Activated T-helper 1 cell treated with anti-CD3 and anti-CD28 coated beads, Interleukin-12 subunit alpha, Interleukin-12 subunit beta, Interleukin-2, Interleukin-4 antibody, amounts not matched to agents 30 ng/mL and 10 ng/mL and 1 ng/mL, durations not matched to agents 14 hours and 24 hours and 36 hours (primary cell): ENCODE measurements at regions of chr15 and their contacts with region 1.

Region 1: DNA sequence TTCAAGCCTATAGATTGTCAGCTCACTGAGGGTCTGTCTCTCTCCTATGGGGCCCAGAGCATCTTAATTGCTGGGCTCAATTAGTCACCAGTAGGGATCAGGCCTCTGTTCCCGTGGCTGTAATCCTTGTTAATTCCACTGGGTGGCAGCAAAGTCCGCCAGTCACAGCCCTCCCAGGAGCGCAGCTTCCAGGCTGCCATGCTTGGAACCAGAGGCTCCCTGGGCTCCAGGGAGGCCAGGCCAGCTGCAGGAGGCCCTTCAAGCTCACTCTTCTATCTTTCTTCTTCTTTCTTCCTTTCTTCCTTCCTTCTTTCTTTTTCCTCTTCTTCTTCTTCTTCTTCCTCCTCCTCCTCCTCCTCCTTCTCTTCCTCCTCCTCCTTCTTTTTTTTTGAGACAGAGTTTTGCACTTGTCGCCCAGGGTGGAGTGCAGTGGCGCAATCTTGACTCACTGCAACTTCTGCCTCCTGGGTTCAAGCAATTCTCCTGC is 14.4 kb downstream of the RNU5B-1 start:
- DNase-seq: peak; percentile 64
- H3K4me3 Mint-ChIP-seq: no peak overlapping the region
- H3K27ac Mint-ChIP-seq: no peak overlapping the region
- H3K4me1 Mint-ChIP-seq: no peaks in the 10 kb centered on the region
- H3K27me3 Mint-ChIP-seq: peaks cover 3% of the 10 kb centered on the region

Region 2: GRCh38 chr15:65364838-65365628 is 46.1 kb after region 1 on chr15:
- intact Hi-C with region 1: no loop called
- DNase-seq: no peak
- H3K4me3 Mint-ChIP-seq: no peak overlapping the region
- H3K27ac Mint-ChIP-seq: no peak overlapping the region
- H3K4me1 Mint-ChIP-seq: no peaks in the 10 kb centered on the region
- H3K27me3 Mint-ChIP-seq: peaks cover 24% of the 10 kb centered on the region

Region 3: GRCh38 chr15:65400760-65401610 is 82.1 kb after region 1 on chr15:
- intact Hi-C with region 1: loop called (anchors 1 kb)
- DNase-seq: peak; percentile 21
- H3K4me3 Mint-ChIP-seq: no peak overlapping the region
- H3K27ac Mint-ChIP-seq: no peak overlapping the region
- H3K4me1 Mint-ChIP-seq: no peaks in the 10 kb centered on the region
- H3K27me3 Mint-ChIP-seq: peaks cover 48% of the 10 kb centered on the region